HCT116 (cell line): ENCODE measurements at regions of chr6 and their contacts with region 1.

Region 1: GRCh38 chr6:53484476-53485280 is 60.2 kb downstream of the GCLC start:
- DNase-seq: peak; percentile 55
- ATAC-seq: peak; percentile 78
- H3K4me3 ChIP-seq: no peak overlapping the region
- H3K27ac ChIP-seq: no peak overlapping the region
- H3K4me1 ChIP-seq: peaks cover 0 to 3% of the 10 kb centered on the region in 2 experiments; a peak in 1 of 4 replicates
- H3K27me3 ChIP-seq: 0 out of 2 replicates have a peak, but pooled peaks cover 4% of the 10 kb centered on the region
- CTCF ChIP-seq: peak; percentile 86 to 98 (median 97)
- POLR2A ChIP-seq: no peak
- RAD21 ChIP-seq: peak; percentile 95

Region 2: DNA sequence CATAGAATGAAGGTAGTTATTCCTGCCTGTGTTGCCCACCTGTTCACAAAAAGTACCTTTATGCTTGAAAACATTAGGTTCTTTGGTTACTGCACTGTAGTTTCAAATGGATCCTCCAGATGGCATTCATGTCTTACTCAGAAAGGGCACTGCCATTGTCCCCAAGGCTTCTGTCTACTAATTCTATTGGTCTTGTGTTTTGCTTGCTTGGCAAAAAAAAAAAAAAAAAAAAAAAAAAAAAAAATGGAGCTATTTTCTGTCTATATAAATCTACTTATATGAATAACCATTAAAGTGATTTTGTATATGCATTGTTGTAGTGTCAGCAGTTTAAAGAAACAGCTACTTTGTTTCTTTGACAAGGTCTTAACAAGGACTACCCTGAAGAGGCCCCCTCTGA is 1077.2 kb before region 1 on chr6:
- CTCF ChIA-PET with region 1: no interaction called
- POLR2A ChIA-PET with region 1: no interaction called
- RAD21 ChIA-PET with region 1: no interaction called
- intact Hi-C with region 1: loop called (anchors 5 kb)
- DNase-seq: no peak
- ATAC-seq: peak; percentile 83
- H3K4me3 ChIP-seq: no peak overlapping the region
- H3K27ac ChIP-seq: no peak overlapping the region
- H3K4me1 ChIP-seq: peaks cover 0 to 5% of the 10 kb centered on the region in 2 experiments; a peak in 1 of 4 replicates
- H3K27me3 ChIP-seq: no peaks in the 10 kb centered on the region
- CTCF ChIP-seq: peak; percentile 68 to 75 (median 69)
- POLR2A ChIP-seq: no peak
- RAD21 ChIP-seq: peak; percentile 76

Region 3: GRCh38 chr6:52724406-52725121 is 760.1 kb before region 1 on chr6:
- CTCF ChIA-PET with region 1: no interaction called
- POLR2A ChIA-PET with region 1: no interaction called
- RAD21 ChIA-PET with region 1: no interaction called
- intact Hi-C with region 1: loop called (anchors 2 kb)
- DNase-seq: peak; percentile 63
- ATAC-seq: peak; percentile 100
- H3K4me3 ChIP-seq: no peak overlapping the region
- H3K27ac ChIP-seq: no peak overlapping the region
- H3K4me1 ChIP-seq: peaks cover 0 to 15% of the 10 kb centered on the region in 2 experiments; a peak in 1 of 4 replicates
- H3K27me3 ChIP-seq: no peaks in the 10 kb centered on the region
- CTCF ChIP-seq: peak; percentile 78 to 97 (median 89)
- POLR2A ChIP-seq: no peak
- RAD21 ChIP-seq: peak; percentile 67

Region 4: DNA sequence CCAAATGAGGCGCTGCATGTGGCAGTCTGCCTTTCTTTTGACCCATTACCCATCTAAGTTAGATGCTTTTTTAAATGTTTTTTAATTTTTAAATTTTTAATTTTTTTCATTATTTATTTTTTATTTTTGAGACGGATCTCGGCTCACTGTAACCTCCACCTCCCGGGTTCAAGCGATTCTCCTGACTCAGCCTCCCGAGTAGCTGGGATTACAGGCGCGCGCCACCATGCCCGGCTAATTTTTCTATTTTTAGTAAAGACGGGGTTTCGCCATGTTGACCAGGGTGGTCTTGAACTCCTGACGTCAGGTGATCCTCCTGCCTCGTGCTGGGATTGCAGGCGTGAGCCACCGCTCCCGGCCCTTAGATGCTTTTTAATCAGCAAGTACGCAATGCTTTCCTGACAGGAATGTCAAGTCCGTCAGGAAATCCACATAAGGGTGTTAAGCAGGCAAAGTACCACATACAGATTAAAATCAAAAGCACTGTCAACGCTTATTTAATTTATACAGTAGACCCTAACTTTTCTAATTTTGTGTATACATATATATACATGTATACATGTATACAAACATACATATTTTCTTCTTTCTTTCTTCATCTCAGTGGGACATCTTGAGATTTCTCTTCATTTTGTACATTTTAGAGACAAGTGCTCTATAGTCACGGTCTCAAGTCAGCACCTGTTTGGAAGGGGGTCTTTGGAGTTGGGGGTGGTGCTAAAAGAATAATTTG is 488.6 kb before region 1 on chr6:
- CTCF ChIA-PET with region 1: no interaction called
- POLR2A ChIA-PET with region 1: no interaction called
- RAD21 ChIA-PET with region 1: no interaction called
- intact Hi-C with region 1: loop called (anchors 10 kb)
- DNase-seq: peak; percentile 76
- ATAC-seq: peak; percentile 9; the same call in 1 of the 2 replicates
- H3K4me3 ChIP-seq: peak overlapping the region; percentile 12 to 21; a peak in 2 of 4 replicates
- H3K27ac ChIP-seq: no peak overlapping the region
- H3K4me1 ChIP-seq: peaks cover 8 to 20% of the 10 kb centered on the region in 2 experiments
- H3K27me3 ChIP-seq: no peaks in the 10 kb centered on the region
- CTCF ChIP-seq: no peak
- POLR2A ChIP-seq: no peak
- RAD21 ChIP-seq: no peak

Region 5: DNA sequence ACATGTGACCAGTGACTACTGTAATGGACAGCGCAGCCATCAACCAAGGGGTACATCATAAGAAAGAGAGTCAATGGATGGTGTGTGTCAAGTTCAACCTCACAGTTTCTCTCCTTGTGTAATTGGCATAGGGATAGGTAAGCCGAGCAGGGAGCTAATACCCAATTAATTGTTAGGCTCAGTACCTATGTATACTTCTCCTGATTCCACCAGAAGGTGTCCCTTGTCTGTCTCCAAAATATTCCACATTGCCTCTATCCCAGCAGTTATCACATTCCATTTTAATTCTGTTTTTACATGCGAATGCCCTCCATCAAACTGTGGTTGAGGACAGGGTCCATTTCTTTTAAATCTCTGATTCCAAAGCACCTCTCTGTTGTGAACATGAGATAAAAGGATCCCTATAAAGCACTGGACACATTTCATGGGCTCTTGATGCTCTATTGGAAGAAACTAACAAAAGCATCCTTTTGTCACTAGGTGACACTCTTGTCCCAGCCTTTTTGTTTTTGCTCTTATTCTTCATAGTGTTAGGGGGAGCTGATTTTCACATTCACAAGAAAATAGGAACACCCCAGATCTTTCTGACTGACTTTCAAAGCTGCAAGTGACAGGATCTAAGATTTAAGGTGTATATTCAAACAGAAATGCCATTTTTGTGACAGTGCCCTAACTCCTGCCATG is 380.5 kb before region 1 on chr6:
- CTCF ChIA-PET with region 1: interaction called, 3 read pairs
- POLR2A ChIA-PET with region 1: no interaction called
- RAD21 ChIA-PET with region 1: no interaction called
- intact Hi-C with region 1: loop called (anchors 1 kb)
- DNase-seq: no peak
- ATAC-seq: peak; percentile 59
- H3K4me3 ChIP-seq: no peak overlapping the region
- H3K27ac ChIP-seq: no peak overlapping the region
- H3K4me1 ChIP-seq: no peaks in the 10 kb centered on the region
- H3K27me3 ChIP-seq: no peaks in the 10 kb centered on the region
- CTCF ChIP-seq: peak; percentile 1 to 62 (median 47); a peak in 4 of 6 replicates
- POLR2A ChIP-seq: no peak
- RAD21 ChIP-seq: peak; percentile 64

Region 6: DNA sequence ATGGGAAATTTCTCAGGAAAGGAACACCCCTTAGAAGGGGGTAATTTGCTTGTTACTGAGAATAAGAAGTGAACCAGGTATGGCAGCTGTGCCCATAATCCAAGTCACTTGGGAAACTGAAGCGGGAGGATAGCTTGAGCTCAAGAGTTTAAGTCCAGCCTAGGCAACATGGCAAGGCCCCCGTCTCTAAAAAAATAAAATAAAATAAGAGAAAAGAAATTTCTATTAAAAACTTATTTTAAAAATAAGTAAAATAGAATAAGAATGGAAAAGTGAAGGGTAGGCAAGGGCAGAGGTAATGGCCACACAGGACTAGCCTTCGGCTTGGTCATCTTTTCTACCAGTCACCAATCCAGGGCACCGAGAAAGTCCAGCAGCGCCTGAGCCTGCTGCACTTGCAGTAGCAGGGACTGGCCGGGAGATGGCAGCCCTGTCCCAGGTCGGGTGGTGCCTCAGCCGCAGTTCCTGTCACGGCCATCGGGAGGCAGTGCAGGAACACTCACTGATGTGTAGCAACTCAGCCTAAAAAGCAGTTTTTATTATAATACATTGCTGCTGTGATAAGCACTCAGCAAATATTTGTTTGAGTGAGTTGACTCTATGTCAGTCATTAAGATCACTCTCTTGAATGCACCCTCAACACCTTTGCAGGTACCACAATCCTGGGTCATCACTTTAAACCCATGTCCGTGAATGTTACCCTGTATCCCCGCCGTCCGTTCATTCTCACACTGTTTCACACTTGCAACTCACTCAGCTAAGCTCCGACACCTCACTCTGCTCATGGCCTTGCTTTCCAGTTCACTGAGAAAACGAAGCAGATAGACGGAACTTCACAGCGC is 312.9 kb before region 1 on chr6:
- CTCF ChIA-PET with region 1: interaction called, 55 read pairs
- POLR2A ChIA-PET with region 1: no interaction called
- RAD21 ChIA-PET with region 1: interaction called in 1 of 2 experiments, 13 read pairs
- intact Hi-C with region 1: loop called (anchors 1 kb)
- DNase-seq: peak; percentile 58
- ATAC-seq: peak; percentile 91
- H3K4me3 ChIP-seq: no peak overlapping the region
- H3K27ac ChIP-seq: no peak overlapping the region
- H3K4me1 ChIP-seq: peaks cover 0 to 10% of the 10 kb centered on the region in 2 experiments; a peak in 1 of 4 replicates
- H3K27me3 ChIP-seq: no peaks in the 10 kb centered on the region
- CTCF ChIP-seq: peak; percentile 100
- POLR2A ChIP-seq: no peak
- RAD21 ChIP-seq: peak; percentile 100

Region 7: DNA sequence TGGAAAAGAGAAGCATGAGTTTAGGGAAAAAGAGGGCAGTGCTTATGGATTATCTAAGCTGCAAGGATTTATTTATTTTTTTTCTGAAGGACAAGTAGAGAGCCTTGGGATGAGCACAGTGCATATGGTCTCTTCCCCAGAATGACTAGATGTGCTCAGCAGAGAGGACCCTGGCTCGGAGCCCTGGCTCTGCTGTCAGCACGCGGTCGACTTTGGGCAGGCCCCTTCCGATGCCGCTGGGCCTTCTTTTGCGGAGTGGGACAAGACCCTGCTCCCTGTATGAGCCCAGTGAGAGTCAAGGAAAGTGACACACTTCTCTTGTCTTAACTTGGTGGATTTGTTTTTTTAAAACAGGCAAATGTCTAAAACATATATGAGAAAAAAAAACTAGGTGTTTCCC is 361.6 kb after region 1 on chr6:
- CTCF ChIA-PET with region 1: no interaction called
- POLR2A ChIA-PET with region 1: no interaction called
- RAD21 ChIA-PET with region 1: no interaction called
- intact Hi-C with region 1: no loop called
- DNase-seq: no peak
- ATAC-seq: no peak
- H3K4me3 ChIP-seq: no peak overlapping the region
- H3K27ac ChIP-seq: no peak overlapping the region
- H3K4me1 ChIP-seq: no peaks in the 10 kb centered on the region
- H3K27me3 ChIP-seq: no peaks in the 10 kb centered on the region
- CTCF ChIP-seq: no peak
- POLR2A ChIP-seq: no peak
- RAD21 ChIP-seq: no peak